Activated CD8-positive, alpha-beta T cell treated with anti-CD3 and anti-CD28 coated beads, Interleukin-2, amount 10 ng/mL, durations not matched to agents 7 days and 5 days (primary cell): ENCODE measurements at regions of chr5 and their contacts with region 1.

Region 1: GRCh38 chr5:59174248-59174844 is 591.5 kb downstream of the RAB3C start:
- DNase-seq: peak; percentile 64
- ATAC-seq: peak; percentile 88
- H3K4me3 Mint-ChIP-seq: no peak overlapping the region
- H3K27ac Mint-ChIP-seq: no peak overlapping the region
- H3K4me1 Mint-ChIP-seq: peaks cover 41% of the 10 kb centered on the region
- H3K27me3 Mint-ChIP-seq: no peaks in the 10 kb centered on the region

Region 2: DNA sequence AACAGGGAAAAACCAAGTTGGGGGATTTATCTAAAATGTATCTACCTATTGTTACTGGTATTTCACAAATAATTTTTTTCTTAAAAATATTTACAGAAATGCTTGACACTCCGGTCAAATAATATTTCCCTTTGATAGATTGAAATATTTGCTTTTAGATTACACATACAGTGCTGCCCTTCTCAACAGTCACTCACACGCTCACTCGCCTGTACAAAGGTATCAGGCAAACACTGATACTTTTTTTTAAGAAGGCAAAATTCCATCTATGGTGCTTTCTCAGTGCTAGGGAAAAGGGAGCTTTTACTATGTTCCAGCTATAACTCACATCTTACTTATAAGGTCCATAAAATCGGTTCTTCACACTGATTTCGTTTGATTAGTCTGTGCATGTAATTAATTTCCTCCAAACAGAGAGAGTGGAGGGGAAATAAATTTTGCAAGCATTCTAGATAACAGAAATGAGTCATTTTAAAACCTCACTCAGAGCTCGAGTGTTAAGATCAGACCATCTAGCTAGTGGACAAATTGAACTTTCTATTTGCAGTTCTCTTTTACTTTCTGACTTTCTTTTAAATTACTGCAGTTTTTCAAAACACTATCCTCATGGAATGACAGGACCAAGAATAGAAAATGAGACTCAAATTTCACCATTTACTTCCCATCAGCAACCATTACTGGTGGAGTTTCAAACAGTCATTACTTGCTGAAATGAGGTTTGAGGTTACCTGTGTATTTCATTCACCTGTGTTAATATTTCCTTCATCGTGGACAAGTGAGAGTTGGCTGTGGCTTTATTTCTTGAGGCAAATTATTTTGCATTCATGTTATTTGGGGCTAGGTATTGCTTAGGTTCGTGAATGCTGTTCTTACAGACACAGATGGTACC is 318.3 kb before region 1 on chr5:
- CTCF ChIA-PET with region 1: no interaction called
- POLR2A ChIA-PET with region 1: no interaction called
- DNase-seq: no peak
- ATAC-seq: no peak
- H3K4me3 Mint-ChIP-seq: no peak overlapping the region
- H3K27ac Mint-ChIP-seq: no peak overlapping the region
- H3K4me1 Mint-ChIP-seq: no peaks in the 10 kb centered on the region
- H3K27me3 Mint-ChIP-seq: peaks cover 21% of the 10 kb centered on the region

Region 3: GRCh38 chr5:58886315-58887207 is 287.8 kb before region 1 on chr5:
- CTCF ChIA-PET with region 1: interaction called, 71 read pairs
- POLR2A ChIA-PET with region 1: no interaction called
- DNase-seq: peak; percentile 73
- ATAC-seq: peak; percentile 90
- H3K4me3 Mint-ChIP-seq: no peak overlapping the region
- H3K27ac Mint-ChIP-seq: peak overlapping the region; percentile 27
- H3K4me1 Mint-ChIP-seq: peaks cover 24% of the 10 kb centered on the region
- H3K27me3 Mint-ChIP-seq: peaks cover 16% of the 10 kb centered on the region

Region 4: GRCh38 chr5:59008816-59009473 is 165.4 kb before region 1 on chr5:
- CTCF ChIA-PET with region 1: interaction called, 13 read pairs
- POLR2A ChIA-PET with region 1: no interaction called
- DNase-seq: no peak
- ATAC-seq: no peak
- H3K4me3 Mint-ChIP-seq: no peak overlapping the region
- H3K27ac Mint-ChIP-seq: no peak overlapping the region
- H3K4me1 Mint-ChIP-seq: peaks cover 55% of the 10 kb centered on the region
- H3K27me3 Mint-ChIP-seq: no peaks in the 10 kb centered on the region

Region 5: GRCh38 chr5:59039296-59040023 is 134.9 kb before region 1 on chr5:
- CTCF ChIA-PET with region 1: interaction called, 234 read pairs
- POLR2A ChIA-PET with region 1: interaction called, 22 read pairs
- DNase-seq: peak; percentile 95
- ATAC-seq: peak; percentile 78
- H3K4me3 Mint-ChIP-seq: peak overlapping the region; percentile 83
- H3K27ac Mint-ChIP-seq: peak overlapping the region; percentile 99
- H3K4me1 Mint-ChIP-seq: peaks cover 50% of the 10 kb centered on the region
- H3K27me3 Mint-ChIP-seq: no peaks in the 10 kb centered on the region

Region 6: DNA sequence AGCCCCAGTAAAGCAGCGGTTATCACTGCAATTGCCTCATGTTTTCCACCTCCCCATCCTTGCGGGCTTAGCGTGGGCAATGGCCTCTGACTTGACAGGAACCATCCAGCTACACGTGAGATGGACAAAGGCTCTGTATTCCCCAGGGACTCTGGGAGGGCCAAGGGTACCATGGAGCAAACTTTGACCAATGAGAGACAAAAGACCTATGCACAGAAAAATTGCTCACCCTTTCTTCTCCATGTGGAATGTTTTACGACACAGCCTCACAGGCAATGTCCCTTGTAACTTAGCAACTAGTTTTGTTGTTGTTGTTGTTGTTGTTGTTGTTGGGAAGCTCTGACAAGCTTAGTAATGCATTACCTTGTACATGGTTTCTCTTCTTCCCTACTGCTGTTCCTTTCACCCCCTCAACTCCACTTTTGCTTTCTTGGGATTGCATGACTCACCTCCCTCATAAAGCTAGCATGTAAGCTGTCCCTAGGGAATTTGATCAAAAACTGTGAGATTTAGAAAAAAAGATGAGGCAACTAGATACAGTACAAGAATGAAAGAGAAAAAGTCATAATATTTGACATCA is 40.6 kb before region 1 on chr5:
- CTCF ChIA-PET with region 1: interaction called, 57 read pairs
- POLR2A ChIA-PET with region 1: interaction called, 9 read pairs
- DNase-seq: no peak
- ATAC-seq: no peak
- H3K4me3 Mint-ChIP-seq: no peak overlapping the region
- H3K27ac Mint-ChIP-seq: peak overlapping the region; percentile 56
- H3K4me1 Mint-ChIP-seq: peaks cover 47% of the 10 kb centered on the region
- H3K27me3 Mint-ChIP-seq: no peaks in the 10 kb centered on the region

Region 7: GRCh38 chr5:59158165-59158564 is 16.2 kb before region 1 on chr5:
- CTCF ChIA-PET with region 1: interaction called, 29 read pairs
- POLR2A ChIA-PET with region 1: no interaction called
- DNase-seq: no peak
- ATAC-seq: no peak
- H3K4me3 Mint-ChIP-seq: no peak overlapping the region
- H3K27ac Mint-ChIP-seq: no peak overlapping the region
- H3K4me1 Mint-ChIP-seq: peaks cover 23% of the 10 kb centered on the region
- H3K27me3 Mint-ChIP-seq: no peaks in the 10 kb centered on the region

Region 8: DNA sequence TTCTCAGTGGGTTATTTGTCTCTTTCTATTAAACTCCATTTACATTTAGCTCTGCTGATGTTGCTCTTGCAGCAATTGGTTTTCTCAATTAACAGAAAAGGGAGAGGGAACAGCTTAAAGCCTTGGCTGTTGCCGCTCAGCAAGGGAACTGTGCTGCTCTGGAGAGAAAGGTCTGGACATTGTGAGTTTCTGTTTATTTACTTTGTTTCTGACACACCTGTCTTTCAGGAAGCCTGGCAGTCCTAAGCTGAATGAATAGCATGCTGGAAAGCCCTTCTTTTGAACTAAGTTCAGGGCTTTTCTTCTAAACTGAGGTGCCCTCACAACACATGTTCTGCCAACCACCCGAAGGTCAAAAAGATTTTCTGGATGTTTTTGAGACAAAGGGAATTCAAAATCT is 227.3 kb after region 1 on chr5:
- CTCF ChIA-PET with region 1: no interaction called
- POLR2A ChIA-PET with region 1: no interaction called
- DNase-seq: no peak
- ATAC-seq: no peak
- H3K4me3 Mint-ChIP-seq: no peak overlapping the region
- H3K27ac Mint-ChIP-seq: no peak overlapping the region
- H3K4me1 Mint-ChIP-seq: no peaks in the 10 kb centered on the region
- H3K27me3 Mint-ChIP-seq: peaks cover 5% of the 10 kb centered on the region

Region 9: DNA sequence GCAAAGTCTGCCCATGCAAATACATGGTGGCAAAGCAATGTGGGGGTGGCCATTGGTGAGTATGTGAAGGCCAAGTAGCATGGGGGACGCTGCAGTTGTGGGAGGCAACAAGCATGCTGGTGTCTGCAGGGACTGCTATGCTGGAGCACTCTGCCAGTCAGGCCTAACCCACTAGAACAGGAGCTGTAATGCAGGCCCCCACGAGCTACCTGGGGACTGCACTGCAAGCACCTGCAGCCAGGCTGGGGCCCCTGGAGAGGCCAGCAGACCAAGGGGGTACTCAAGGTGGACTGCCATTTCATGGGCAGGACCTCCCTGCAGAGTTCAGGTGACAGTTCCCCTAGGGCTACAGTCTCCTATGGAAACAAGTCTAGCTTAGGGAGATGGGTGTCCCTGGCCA is 902.9 kb after region 1 on chr5:
- CTCF ChIA-PET with region 1: no interaction called
- POLR2A ChIA-PET with region 1: no interaction called
- DNase-seq: no peak
- ATAC-seq: no peak
- H3K4me3 Mint-ChIP-seq: no peak overlapping the region
- H3K27ac Mint-ChIP-seq: no peak overlapping the region
- H3K4me1 Mint-ChIP-seq: no peaks in the 10 kb centered on the region
- H3K27me3 Mint-ChIP-seq: no peaks in the 10 kb centered on the region